ENCODE measurements at regions of chr19 and their contacts with region 1.

Region 1: GRCh38 chr19:49391581-49392399 is 3.7 kb downstream of the KASH5 start:
- DNase-seq: peak; percentile 61 to 89 (median 81)
- ATAC-seq: peak; percentile 80
- H3K4me3 ChIP-seq: no peak overlapping the region
- H3K4me3 Mint-ChIP-seq: no peak overlapping the region
- H3K27ac ChIP-seq: peak overlapping the region in 1 of 2 experiments; percentile 20
- H3K27ac Mint-ChIP-seq: peak overlapping the region; percentile 46
- H3K4me1 ChIP-seq: peaks cover 16% of the 10 kb centered on the region
- H3K4me1 Mint-ChIP-seq: peaks cover 11% of the 10 kb centered on the region
- H3K27me3 ChIP-seq: no peaks in the 10 kb centered on the region
- H3K27me3 Mint-ChIP-seq: no peaks in the 10 kb centered on the region
- CTCF ChIP-seq: peak; percentile 95

Region 2: DNA sequence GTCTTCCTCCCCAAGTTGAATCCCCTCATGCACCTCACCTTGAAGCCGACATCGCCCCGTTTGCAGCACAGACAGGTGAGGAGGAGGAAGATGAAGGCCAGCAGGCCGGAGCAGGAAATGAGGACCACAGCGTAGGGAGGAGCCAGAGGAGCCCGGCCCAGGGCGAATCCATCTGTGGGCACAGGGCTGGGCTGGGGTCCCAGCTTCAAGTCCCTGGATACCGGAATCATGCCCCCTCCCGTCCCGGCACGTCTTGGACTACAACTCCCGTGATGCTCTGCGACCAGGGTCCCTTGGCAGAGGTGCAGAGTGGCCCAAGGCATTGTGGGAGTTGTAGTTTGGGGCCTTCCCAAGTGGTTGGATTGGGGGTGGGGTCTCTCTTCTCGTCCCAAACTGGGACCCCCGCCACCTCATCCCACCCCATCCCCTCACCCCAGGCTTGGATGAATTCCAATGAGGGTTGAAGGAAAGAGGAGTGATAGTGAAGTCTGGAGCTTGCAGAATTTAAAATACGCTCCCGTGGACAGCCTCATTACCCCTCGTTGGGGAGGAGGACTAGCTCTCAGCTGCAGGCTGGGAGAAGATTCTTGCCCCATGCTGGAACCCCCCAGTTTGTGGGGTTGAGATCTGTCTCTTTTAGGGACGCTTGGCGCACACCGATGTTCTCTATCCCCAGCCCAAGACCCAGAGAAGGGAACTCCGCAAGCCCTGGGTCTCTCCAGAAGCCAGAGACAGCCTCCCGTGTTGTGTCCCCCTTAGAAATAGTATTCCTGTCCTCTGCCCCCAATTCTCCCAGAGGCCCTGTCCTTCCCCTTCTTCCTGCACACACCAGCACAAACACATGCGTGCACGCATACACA is 881.1 kb before region 1 on chr19:
- CTCF ChIA-PET with region 1: no interaction called
- POLR2A ChIA-PET with region 1: no interaction called
- intact Hi-C with region 1: no loop called
- DNase-seq: peak; percentile 61 to 86 (median 78)
- ATAC-seq: peak; percentile 51
- H3K4me3 ChIP-seq: peak overlapping the region; percentile 51 to 63
- H3K4me3 Mint-ChIP-seq: peak overlapping the region; percentile 88
- H3K27ac ChIP-seq: peak overlapping the region; percentile 24 to 42
- H3K27ac Mint-ChIP-seq: peak overlapping the region; percentile 82
- H3K4me1 ChIP-seq: peaks cover 23% of the 10 kb centered on the region
- H3K4me1 Mint-ChIP-seq: peaks cover 18% of the 10 kb centered on the region
- H3K27me3 ChIP-seq: no peaks in the 10 kb centered on the region
- H3K27me3 Mint-ChIP-seq: no peaks in the 10 kb centered on the region
- CTCF ChIP-seq: no peak

Region 3: GRCh38 chr19:48881741-48882657 is 509.8 kb before region 1 on chr19:
- CTCF ChIA-PET with region 1: no interaction called
- POLR2A ChIA-PET with region 1: no interaction called
- intact Hi-C with region 1: no loop called
- DNase-seq: peak in 4 of 9 experiments; percentile 22 to 59 (median 38)
- ATAC-seq: peak; percentile 85
- H3K4me3 ChIP-seq: no peak overlapping the region
- H3K4me3 Mint-ChIP-seq: no peak overlapping the region
- H3K27ac ChIP-seq: no peak overlapping the region
- H3K27ac Mint-ChIP-seq: no peak overlapping the region
- H3K4me1 ChIP-seq: no peaks in the 10 kb centered on the region
- H3K4me1 Mint-ChIP-seq: peaks cover 2% of the 10 kb centered on the region
- H3K27me3 ChIP-seq: no peaks in the 10 kb centered on the region
- H3K27me3 Mint-ChIP-seq: no peaks in the 10 kb centered on the region
- CTCF ChIP-seq: no peak

Region 4: GRCh38 chr19:49301165-49301865 is 90.5 kb before region 1 on chr19:
- CTCF ChIA-PET with region 1: no interaction called
- POLR2A ChIA-PET with region 1: no interaction called
- intact Hi-C with region 1: no loop called
- DNase-seq: peak; percentile 58 to 86 (median 82)
- ATAC-seq: peak; percentile 83
- H3K4me3 ChIP-seq: no peak overlapping the region
- H3K4me3 Mint-ChIP-seq: no peak overlapping the region
- H3K27ac ChIP-seq: no peak overlapping the region
- H3K27ac Mint-ChIP-seq: no peak overlapping the region
- H3K4me1 ChIP-seq: peaks cover 5% of the 10 kb centered on the region
- H3K4me1 Mint-ChIP-seq: peaks cover 8% of the 10 kb centered on the region
- H3K27me3 ChIP-seq: no peaks in the 10 kb centered on the region
- H3K27me3 Mint-ChIP-seq: no peaks in the 10 kb centered on the region
- CTCF ChIP-seq: peak; percentile 88

Region 5: GRCh38 chr19:49409441-49410029 is 17.7 kb after region 1 on chr19:
- CTCF ChIA-PET with region 1: interaction called, 16 read pairs
- POLR2A ChIA-PET with region 1: interaction called, 3 read pairs
- intact Hi-C with region 1: no loop called
- DNase-seq: peak in 2 of 9 experiments; percentile 30 to 52
- ATAC-seq: peak; percentile 40
- H3K4me3 ChIP-seq: peak overlapping the region in 1 of 2 experiments; percentile 3
- H3K4me3 Mint-ChIP-seq: peak overlapping the region; percentile 43
- H3K27ac ChIP-seq: peak overlapping the region in 1 of 2 experiments; percentile 46
- H3K27ac Mint-ChIP-seq: peak overlapping the region; percentile 78
- H3K4me1 ChIP-seq: peaks cover 37% of the 10 kb centered on the region
- H3K4me1 Mint-ChIP-seq: peaks cover 46% of the 10 kb centered on the region
- H3K27me3 ChIP-seq: no peaks in the 10 kb centered on the region
- H3K27me3 Mint-ChIP-seq: no peaks in the 10 kb centered on the region
- CTCF ChIP-seq: no peak

Region 6: GRCh38 chr19:49430678-49431329 is 39.0 kb after region 1 on chr19:
- CTCF ChIA-PET with region 1: interaction called, 24 read pairs
- POLR2A ChIA-PET with region 1: no interaction called
- intact Hi-C with region 1: loop called in 1 of 2 experiments (anchors 2 kb)
- DNase-seq: peak in 2 of 9 experiments; percentile 44 to 52
- ATAC-seq: peak; percentile 37
- H3K4me3 ChIP-seq: no peak overlapping the region
- H3K4me3 Mint-ChIP-seq: no peak overlapping the region
- H3K27ac ChIP-seq: no peak overlapping the region
- H3K27ac Mint-ChIP-seq: no peak overlapping the region
- H3K4me1 ChIP-seq: peaks cover 36% of the 10 kb centered on the region
- H3K4me1 Mint-ChIP-seq: peaks cover 42% of the 10 kb centered on the region
- H3K27me3 ChIP-seq: peaks cover 63 to 82% of the 10 kb centered on the region in 2 experiments
- H3K27me3 Mint-ChIP-seq: peaks cover 77% of the 10 kb centered on the region
- CTCF ChIP-seq: peak; percentile 26

Region 7: DNA sequence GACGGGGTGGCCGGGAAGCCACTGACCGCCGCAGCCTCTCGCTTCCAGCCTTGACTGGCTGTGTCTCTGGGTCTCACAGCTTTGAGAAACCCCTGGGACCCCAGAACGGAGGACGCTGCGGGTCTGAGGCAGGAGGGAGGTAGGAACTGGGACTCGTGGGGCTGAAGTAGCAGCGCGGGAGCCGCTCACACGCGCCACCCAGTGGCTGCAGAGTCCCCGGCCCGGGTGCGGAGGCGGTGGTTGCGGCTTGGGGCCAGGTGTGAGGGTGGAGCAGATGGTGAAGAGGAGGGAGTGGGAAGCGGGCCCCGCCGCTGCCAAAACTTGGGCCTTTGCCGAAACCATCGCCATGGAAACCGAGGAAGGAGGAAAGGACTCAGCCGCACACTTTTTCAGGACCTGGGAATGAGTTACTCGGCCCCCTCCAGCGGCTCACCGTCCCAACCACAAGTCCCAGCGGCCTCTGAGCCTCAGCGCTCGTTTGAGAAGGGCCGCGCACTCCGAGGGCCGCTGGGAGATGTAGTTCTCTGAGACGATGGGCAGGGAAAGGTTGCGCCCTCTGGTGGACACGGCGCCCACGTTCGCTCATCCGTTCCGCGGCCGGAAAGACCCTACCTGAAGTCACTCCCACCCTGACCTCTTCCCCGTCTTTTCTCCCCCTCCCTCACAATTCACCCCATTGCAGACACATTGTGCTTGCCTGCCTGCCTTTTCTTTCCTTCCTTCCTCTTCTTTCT is 51.7 kb after region 1 on chr19:
- CTCF ChIA-PET with region 1: interaction called, 89 read pairs
- POLR2A ChIA-PET with region 1: interaction called, 4 read pairs
- intact Hi-C with region 1: loop called in 1 of 2 experiments (anchors 1 kb)
- DNase-seq: peak; percentile 86 to 97 (median 94)
- ATAC-seq: peak; percentile 88
- H3K4me3 ChIP-seq: peak overlapping the region; percentile 57 to 76
- H3K4me3 Mint-ChIP-seq: peak overlapping the region; percentile 79
- H3K27ac ChIP-seq: peak overlapping the region; percentile 48 to 66
- H3K27ac Mint-ChIP-seq: peak overlapping the region; percentile 71
- H3K4me1 ChIP-seq: peaks cover 25% of the 10 kb centered on the region
- H3K4me1 Mint-ChIP-seq: peaks cover 37% of the 10 kb centered on the region
- H3K27me3 ChIP-seq: peaks cover 37 to 40% of the 10 kb centered on the region in 2 experiments
- H3K27me3 Mint-ChIP-seq: peaks cover 36% of the 10 kb centered on the region
- CTCF ChIP-seq: peak; percentile 74

Region 8: DNA sequence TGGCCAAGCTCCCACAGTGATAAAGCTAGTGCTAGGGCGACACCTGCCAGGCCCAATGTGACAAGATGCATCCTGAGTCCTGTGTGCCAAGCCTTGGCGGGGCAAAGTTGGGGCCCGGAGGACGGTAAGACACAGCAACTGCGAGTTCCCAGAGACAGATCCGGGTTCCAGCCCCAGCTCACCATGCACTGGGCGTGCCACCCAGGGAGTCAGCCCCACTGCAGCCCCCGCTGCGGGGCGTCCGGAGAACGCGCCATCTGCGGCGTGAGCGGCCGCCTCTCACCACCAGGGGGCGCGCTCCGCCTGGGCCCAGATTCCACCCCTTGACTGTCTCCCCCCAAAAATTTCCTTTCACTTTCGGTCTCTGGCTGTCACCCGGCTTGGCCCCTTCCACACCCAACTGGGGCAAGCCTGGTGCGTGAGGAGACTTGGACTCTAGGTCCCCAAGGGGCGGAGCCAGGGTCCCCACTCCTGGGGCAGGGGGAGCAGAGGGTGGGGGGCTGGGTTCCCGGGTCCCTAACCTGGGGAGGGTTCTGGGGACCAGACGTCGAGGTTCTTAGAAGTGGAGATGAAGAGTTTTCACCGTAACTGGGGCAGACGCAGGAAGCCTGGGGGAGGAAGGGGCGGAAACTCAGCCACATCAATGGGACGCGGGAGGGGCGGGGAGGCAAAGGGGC is 82.2 kb after region 1 on chr19 and contains the start of gene FLT3LG:
- CTCF ChIA-PET with region 1: interaction called, 57 read pairs
- POLR2A ChIA-PET with region 1: interaction called, 8 read pairs
- intact Hi-C with region 1: loop called (anchors 1 kb)
- DNase-seq: peak; percentile 83 to 97 (median 91)
- ATAC-seq: peak; percentile 58
- H3K4me3 ChIP-seq: peak within 1 kb of the TSS; percentile 88 to 98
- H3K4me3 Mint-ChIP-seq: peak within 1 kb of the TSS; percentile 91
- H3K27ac ChIP-seq: peak within 1 kb of the TSS; percentile 92 to 96
- H3K27ac Mint-ChIP-seq: peak within 1 kb of the TSS; percentile 98
- H3K4me1 ChIP-seq: peaks cover 53% of the 10 kb centered on the region
- H3K4me1 Mint-ChIP-seq: peaks cover 54% of the 10 kb centered on the region
- H3K27me3 ChIP-seq: no peaks in the 10 kb centered on the region
- H3K27me3 Mint-ChIP-seq: no peaks in the 10 kb centered on the region
- CTCF ChIP-seq: peak; percentile 83
- total RNA-seq, gene FLT3LG: 246 to 259 TPM

Region 9: DNA sequence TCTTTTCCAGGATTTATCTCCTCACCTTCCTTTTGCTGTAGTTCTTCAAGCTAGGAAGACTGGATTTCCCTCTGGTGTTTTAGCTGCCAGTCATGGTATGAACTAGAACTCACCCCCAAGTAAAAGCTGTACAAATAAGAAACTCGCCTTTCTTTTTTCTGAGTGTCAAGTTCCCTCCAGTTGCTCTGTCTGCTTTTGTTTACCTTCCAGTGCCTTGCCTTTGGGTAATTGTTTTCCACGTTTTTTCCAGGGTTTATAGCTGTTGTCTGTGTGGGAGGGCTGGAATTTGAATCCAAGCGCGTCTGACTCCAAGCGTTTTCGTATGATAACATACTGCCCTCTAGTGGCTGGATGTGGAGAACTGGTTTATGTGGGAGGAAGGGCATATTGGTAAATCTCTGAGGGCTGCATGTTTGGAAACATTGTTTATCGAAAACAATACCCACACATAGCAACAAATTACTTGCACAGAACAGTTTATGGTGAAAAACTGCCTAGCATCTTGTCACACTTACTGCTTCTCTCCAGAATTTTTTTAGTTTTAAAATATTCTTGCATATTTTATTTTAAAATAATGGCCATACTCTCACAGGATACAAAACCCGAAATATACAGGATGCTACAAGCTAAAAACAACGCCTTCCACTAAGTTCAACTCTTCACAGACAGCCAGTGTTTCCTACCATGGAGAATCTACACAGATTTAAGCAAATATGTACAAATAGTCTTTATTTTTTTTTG is 155.2 kb after region 1 on chr19:
- CTCF ChIA-PET with region 1: interaction called, 5 read pairs
- POLR2A ChIA-PET with region 1: no interaction called
- intact Hi-C with region 1: loop called in 1 of 2 experiments (anchors 5 kb)
- DNase-seq: peak in 7 of 9 experiments; percentile 51 to 89 (median 70)
- ATAC-seq: peak; percentile 78
- H3K4me3 ChIP-seq: peak overlapping the region; percentile 3 to 41
- H3K4me3 Mint-ChIP-seq: peak overlapping the region; percentile 79
- H3K27ac ChIP-seq: no peak overlapping the region
- H3K27ac Mint-ChIP-seq: peak overlapping the region; percentile 82
- H3K4me1 ChIP-seq: peaks cover 49% of the 10 kb centered on the region
- H3K4me1 Mint-ChIP-seq: peaks cover 40% of the 10 kb centered on the region
- H3K27me3 ChIP-seq: no peaks in the 10 kb centered on the region
- H3K27me3 Mint-ChIP-seq: no peaks in the 10 kb centered on the region
- CTCF ChIP-seq: peak; percentile 89